ENCODE measurements at regions of chr6 and their contacts with region 1.

Region 1: GRCh38 chr6:55276745-55277530 is 50.3 kb upstream of the GFRAL start:
- DNase-seq: peak; percentile 21
- ATAC-seq: no peak
- H3K4me3 Mint-ChIP-seq: no peak overlapping the region
- H3K27ac Mint-ChIP-seq: no peak overlapping the region
- H3K4me1 Mint-ChIP-seq: no peaks in the 10 kb centered on the region
- H3K27me3 Mint-ChIP-seq: no peaks in the 10 kb centered on the region

Region 2: DNA sequence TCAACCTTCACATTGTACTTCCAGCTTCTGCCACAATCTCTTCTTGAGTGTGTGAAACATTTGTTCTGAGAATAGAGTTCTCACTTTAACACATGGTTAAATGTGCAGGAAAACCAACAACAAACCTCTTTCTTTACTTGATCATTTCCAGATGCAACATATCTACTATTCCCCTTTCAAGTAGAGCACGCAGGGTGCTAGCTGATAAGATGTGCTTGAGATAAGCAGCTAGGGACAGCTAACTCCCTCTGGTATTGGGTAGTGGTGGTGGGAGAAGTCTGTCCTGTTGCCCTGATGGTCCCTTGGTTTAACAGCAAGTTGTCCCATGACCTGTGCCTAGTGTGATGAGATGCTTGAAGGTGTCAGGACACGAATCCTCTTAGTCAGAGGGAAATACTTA is 317.5 kb after region 1 on chr6:
- CTCF ChIA-PET with region 1: no interaction called
- POLR2A ChIA-PET with region 1: interaction called, 15 read pairs
- intact Hi-C with region 1: no loop called
- DNase-seq: no peak
- ATAC-seq: no peak
- H3K4me3 Mint-ChIP-seq: no peak overlapping the region
- H3K27ac Mint-ChIP-seq: no peak overlapping the region
- H3K4me1 Mint-ChIP-seq: no peaks in the 10 kb centered on the region
- H3K27me3 Mint-ChIP-seq: no peaks in the 10 kb centered on the region

Region 3: GRCh38 chr6:56223995-56224394 is 947.1 kb after region 1 on chr6:
- CTCF ChIA-PET with region 1: no interaction called
- POLR2A ChIA-PET with region 1: no interaction called
- intact Hi-C with region 1: no loop called
- DNase-seq: no peak
- ATAC-seq: no peak
- H3K4me3 Mint-ChIP-seq: no peak overlapping the region
- H3K27ac Mint-ChIP-seq: no peak overlapping the region
- H3K4me1 Mint-ChIP-seq: no peaks in the 10 kb centered on the region
- H3K27me3 Mint-ChIP-seq: no peaks in the 10 kb centered on the region